Caco-2 (cell line): ENCODE measurements at regions of chr19 and their contacts with region 1.

Region 1: GRCh38 chr19:47112997-47113849 is at the start of gene ZC3H4:
- DNase-seq: peak; percentile 100
- H3K4me3 ChIP-seq: peak within 1 kb of the TSS; percentile 64
- H3K4me3 Mint-ChIP-seq: peak within 1 kb of the TSS; percentile 97
- H3K27ac Mint-ChIP-seq: peak within 1 kb of the TSS; percentile 99
- H3K4me1 ChIP-seq: peaks cover 20% of the 10 kb centered on the region
- H3K4me1 Mint-ChIP-seq: peaks cover 28% of the 10 kb centered on the region
- H3K27me3 ChIP-seq: no peaks in the 10 kb centered on the region
- H3K27me3 Mint-ChIP-seq: no peaks in the 10 kb centered on the region
- CTCF ChIP-seq: peak in 1 of 2 experiments; percentile 11
- total RNA-seq, gene ZC3H4: 70.3 and 77.7 TPM in 2 replicates

Region 2: GRCh38 chr19:46661020-46661731 is 452.0 kb before region 1 on chr19 and contains the start of gene DACT3:
- CTCF ChIA-PET with region 1: interaction called, 14 read pairs
- POLR2A ChIA-PET with region 1: no interaction called
- intact Hi-C with region 1: no loop called
- DNase-seq: peak; percentile 100
- H3K4me3 ChIP-seq: peak within 1 kb of the TSS; percentile 54
- H3K4me3 Mint-ChIP-seq: peak within 1 kb of the TSS; percentile 73
- H3K27ac Mint-ChIP-seq: peak within 1 kb of the TSS; percentile 63
- H3K4me1 ChIP-seq: peaks cover 11% of the 10 kb centered on the region; the same call in 1 of the 2 replicates
- H3K4me1 Mint-ChIP-seq: peaks cover 14% of the 10 kb centered on the region
- H3K27me3 ChIP-seq: no peaks in the 10 kb centered on the region; the same call in 1 of the 2 replicates
- H3K27me3 Mint-ChIP-seq: peaks cover 15% of the 10 kb centered on the region
- CTCF ChIP-seq: no peak
- total RNA-seq, gene DACT3: 0.39 and 0.75 TPM in 2 replicates

Region 3: DNA sequence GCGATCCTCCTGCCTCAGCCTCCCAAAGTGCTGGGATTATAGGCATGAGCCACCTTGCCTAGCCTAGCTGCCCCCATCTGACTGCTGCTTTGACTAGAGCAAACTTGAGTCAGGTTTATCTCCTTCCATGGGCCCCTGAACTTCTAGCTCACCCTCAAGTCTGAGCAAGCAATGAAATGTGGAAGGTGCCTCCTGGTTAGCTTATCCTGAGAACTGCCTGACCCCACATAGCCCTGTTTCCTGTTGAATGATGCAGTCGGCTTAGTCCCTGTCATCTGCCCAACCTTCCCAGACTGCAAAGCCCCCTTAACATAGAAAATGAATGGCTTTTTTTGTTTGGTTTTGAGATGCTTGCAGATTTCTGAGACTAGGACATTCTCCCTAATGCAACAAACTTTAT is 55.9 kb before region 1 on chr19:
- CTCF ChIA-PET with region 1: interaction called, 6 read pairs
- POLR2A ChIA-PET with region 1: interaction called, 32 read pairs
- intact Hi-C with region 1: no loop called
- DNase-seq: no peak
- H3K4me3 ChIP-seq: no peak overlapping the region
- H3K4me3 Mint-ChIP-seq: peak overlapping the region; percentile 64
- H3K27ac Mint-ChIP-seq: peak overlapping the region; percentile 95
- H3K4me1 ChIP-seq: peaks cover 55% of the 10 kb centered on the region
- H3K4me1 Mint-ChIP-seq: peaks cover 63% of the 10 kb centered on the region
- H3K27me3 ChIP-seq: no peaks in the 10 kb centered on the region
- H3K27me3 Mint-ChIP-seq: no peaks in the 10 kb centered on the region
- CTCF ChIP-seq: no peak

Region 4: GRCh38 chr19:47081111-47081510 is 32.1 kb before region 1 on chr19:
- CTCF ChIA-PET with region 1: interaction called, 25 read pairs
- POLR2A ChIA-PET with region 1: interaction called, 17 read pairs
- intact Hi-C with region 1: loop called (anchors 5 kb)
- DNase-seq: no peak
- H3K4me3 ChIP-seq: no peak overlapping the region
- H3K4me3 Mint-ChIP-seq: no peak overlapping the region
- H3K27ac Mint-ChIP-seq: no peak overlapping the region
- H3K4me1 ChIP-seq: peaks cover 20% of the 10 kb centered on the region
- H3K4me1 Mint-ChIP-seq: peaks cover 7% of the 10 kb centered on the region
- H3K27me3 ChIP-seq: no peaks in the 10 kb centered on the region
- H3K27me3 Mint-ChIP-seq: no peaks in the 10 kb centered on the region
- CTCF ChIP-seq: no peak

Region 5: GRCh38 chr19:47124937-47125668 is 11.9 kb after region 1 on chr19:
- CTCF ChIA-PET with region 1: interaction called, 3 read pairs
- POLR2A ChIA-PET with region 1: interaction called, 11 read pairs
- intact Hi-C with region 1: loop called (anchors 1 kb)
- DNase-seq: peak; percentile 66 to 74
- H3K4me3 ChIP-seq: no peak overlapping the region
- H3K4me3 Mint-ChIP-seq: peak overlapping the region; percentile 59
- H3K27ac Mint-ChIP-seq: peak overlapping the region; percentile 88
- H3K4me1 ChIP-seq: peaks cover 27% of the 10 kb centered on the region
- H3K4me1 Mint-ChIP-seq: peaks cover 19% of the 10 kb centered on the region
- H3K27me3 ChIP-seq: no peaks in the 10 kb centered on the region
- H3K27me3 Mint-ChIP-seq: no peaks in the 10 kb centered on the region
- CTCF ChIP-seq: peak; percentile 53 to 80

Region 6: GRCh38 chr19:47203254-47203653 is 90.0 kb after region 1 on chr19:
- CTCF ChIA-PET with region 1: no interaction called
- POLR2A ChIA-PET with region 1: no interaction called
- intact Hi-C with region 1: no loop called
- DNase-seq: no peak
- H3K4me3 ChIP-seq: no peak overlapping the region
- H3K4me3 Mint-ChIP-seq: no peak overlapping the region
- H3K27ac Mint-ChIP-seq: peak overlapping the region; percentile 26
- H3K4me1 ChIP-seq: no peaks in the 10 kb centered on the region
- H3K4me1 Mint-ChIP-seq: no peaks in the 10 kb centered on the region
- H3K27me3 ChIP-seq: no peaks in the 10 kb centered on the region
- H3K27me3 Mint-ChIP-seq: no peaks in the 10 kb centered on the region
- CTCF ChIP-seq: no peak

Region 7: DNA sequence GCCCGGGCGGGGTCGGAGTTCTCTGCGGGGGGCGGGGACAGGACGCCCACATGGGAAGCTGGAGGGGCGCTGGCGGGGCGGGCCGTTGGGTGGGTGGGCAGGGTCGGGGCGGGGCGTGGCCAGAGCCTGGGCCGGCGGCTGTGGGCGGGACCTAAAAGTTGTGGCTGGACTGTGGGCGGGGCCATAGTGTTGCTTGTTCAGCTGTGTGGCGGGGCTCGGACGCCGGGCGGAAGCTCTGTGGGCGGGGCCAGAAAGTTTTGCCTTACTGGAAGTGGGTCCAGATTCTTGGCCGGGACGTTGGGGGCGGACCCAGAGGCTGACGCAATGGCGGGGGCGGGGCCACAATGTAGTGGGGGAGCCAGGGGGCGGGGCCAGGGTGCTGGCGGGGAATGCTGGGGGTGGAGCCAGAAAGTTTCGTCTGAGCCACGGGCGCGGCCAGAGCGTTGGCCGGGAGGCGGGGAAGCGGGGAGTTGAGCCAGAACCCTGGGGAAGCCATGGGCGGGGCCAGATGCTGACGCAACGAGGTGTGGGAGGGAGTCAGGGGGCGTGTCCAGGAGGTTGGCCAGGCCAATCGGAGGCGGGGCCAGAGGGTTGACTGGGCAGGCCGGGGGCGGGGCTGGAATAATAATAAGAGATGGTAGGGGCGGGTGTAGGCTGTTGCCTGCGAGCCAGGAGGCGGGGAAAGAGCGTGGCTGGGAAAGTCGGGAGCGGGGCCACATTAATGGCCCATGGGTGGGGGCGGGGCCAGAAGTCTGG is 143.6 kb after region 1 on chr19:
- CTCF ChIA-PET with region 1: no interaction called
- POLR2A ChIA-PET with region 1: interaction called, 32 read pairs
- intact Hi-C with region 1: no loop called
- DNase-seq: peak; percentile 100
- H3K4me3 ChIP-seq: peak overlapping the region; percentile 76
- H3K4me3 Mint-ChIP-seq: peak overlapping the region; percentile 92
- H3K27ac Mint-ChIP-seq: peak overlapping the region; percentile 96
- H3K4me1 ChIP-seq: peaks cover 22% of the 10 kb centered on the region
- H3K4me1 Mint-ChIP-seq: peaks cover 14% of the 10 kb centered on the region
- H3K27me3 ChIP-seq: no peaks in the 10 kb centered on the region
- H3K27me3 Mint-ChIP-seq: no peaks in the 10 kb centered on the region
- CTCF ChIP-seq: no peak